Naive thymus-derived CD4-positive, alpha-beta T cell (primary cell): ENCODE measurements at regions of chr3 and their contacts with region 1.

Region 1: GRCh38 chr3:156554842-156555687 is at the start of gene SSR3:
- DNase-seq: peak; percentile 95 to 99 (median 98)
- ATAC-seq: peak; percentile 100
- H3K4me3 ChIP-seq: peak within 1 kb of the TSS; percentile 95
- H3K4me3 Mint-ChIP-seq: peak within 1 kb of the TSS; percentile 88 to 98 (median 97)
- H3K27ac ChIP-seq: peak within 1 kb of the TSS; percentile 85
- H3K27ac Mint-ChIP-seq: peak within 1 kb of the TSS; percentile 89 to 96 (median 92)
- H3K4me1 ChIP-seq: peaks cover 16% of the 10 kb centered on the region in 2 donors
- H3K4me1 Mint-ChIP-seq: peaks cover 29 to 57% (median 50%) of the 10 kb centered on the region in 7 donors
- H3K27me3 ChIP-seq: no peaks in the 10 kb centered on the region
- H3K27me3 Mint-ChIP-seq: no peaks in the 10 kb centered on the region
- total RNA-seq, gene SSR3: 56.0 to 158 (median 76.2) TPM

Region 2: DNA sequence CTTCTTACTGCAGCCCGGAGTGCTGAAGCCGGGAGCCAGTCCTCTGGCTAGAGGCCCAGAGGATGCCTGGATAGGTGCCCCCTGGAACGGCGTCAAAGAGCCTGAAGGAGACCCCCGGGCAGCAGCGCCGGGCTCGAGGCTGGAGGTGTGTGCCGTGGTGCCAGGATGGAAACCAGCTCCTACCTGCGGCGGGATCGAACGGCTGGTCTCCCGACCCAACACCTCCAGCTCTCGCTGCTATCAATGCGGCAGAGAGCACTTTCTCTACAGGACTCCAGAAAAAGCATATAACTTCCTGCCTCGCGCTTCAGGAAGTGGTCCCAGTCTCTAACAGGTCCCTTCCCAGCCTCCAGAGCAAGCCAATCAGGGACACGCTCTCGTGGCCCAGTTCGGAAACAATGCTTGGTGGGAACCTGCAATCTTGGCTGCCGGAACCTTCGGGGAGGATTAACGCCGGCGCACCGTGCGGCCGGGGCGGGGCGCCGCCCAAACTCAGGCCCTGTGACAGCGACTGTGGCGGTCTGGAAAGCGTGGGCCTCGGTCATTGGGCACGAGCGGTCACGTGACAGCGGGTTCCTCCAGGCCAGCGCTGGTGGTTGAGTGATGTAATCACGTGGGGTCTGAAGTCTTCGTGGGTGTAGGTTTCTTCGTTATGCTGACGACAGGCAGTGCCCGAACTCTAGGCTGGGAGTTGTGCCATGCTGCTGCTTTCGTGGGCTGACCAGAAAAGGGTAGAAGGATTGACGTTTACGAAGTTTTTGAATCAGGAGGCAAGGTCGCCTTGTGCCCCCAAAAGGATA is 700.7 kb before region 1 on chr3 and contains the start of gene SLC33A1:
- CTCF ChIA-PET with region 1: no interaction called
- POLR2A ChIA-PET with region 1: interaction called, 3 read pairs
- intact Hi-C with region 1: loop called (anchors 1 to 10 kb)
- DNase-seq: peak; percentile 95 to 99 (median 98)
- ATAC-seq: peak; percentile 96
- H3K4me3 ChIP-seq: peak within 1 kb of the TSS; percentile 85
- H3K4me3 Mint-ChIP-seq: peak within 1 kb of the TSS; percentile 86 to 99 (median 95)
- H3K27ac ChIP-seq: peak within 1 kb of the TSS; percentile 90
- H3K27ac Mint-ChIP-seq: peak within 1 kb of the TSS; percentile 97 to 100 (median 99)
- H3K4me1 ChIP-seq: peaks cover 19 to 33% of the 10 kb centered on the region in 2 donors
- H3K4me1 Mint-ChIP-seq: peaks cover 24 to 47% (median 39%) of the 10 kb centered on the region in 7 donors
- H3K27me3 ChIP-seq: no peaks in the 10 kb centered on the region
- H3K27me3 Mint-ChIP-seq: peaks cover 0 to 7% (median 0%) of the 10 kb centered on the region in 5 donors
- total RNA-seq, gene SLC33A1: 19.8 to 40.8 (median 31.9) TPM

Region 3: DNA sequence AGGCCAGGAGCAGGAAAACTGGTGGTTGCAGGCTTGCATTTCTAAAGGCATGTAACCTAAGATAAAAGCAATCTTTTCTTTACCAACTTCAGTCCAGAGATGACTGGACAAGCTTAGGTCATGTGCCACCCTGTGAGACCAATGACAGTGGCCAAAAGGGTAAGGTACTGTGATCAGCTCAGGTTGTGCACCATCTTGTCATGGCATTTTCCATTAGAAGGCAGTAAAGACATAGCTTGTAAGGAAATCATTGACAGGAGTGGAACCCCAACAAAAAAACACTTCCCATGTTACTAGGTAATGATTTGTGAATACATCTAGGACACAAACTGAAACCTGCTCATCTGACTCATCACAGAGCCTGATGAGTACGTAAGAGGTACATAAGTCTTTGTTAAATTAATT is 35.3 kb before region 1 on chr3:
- CTCF ChIA-PET with region 1: interaction called, 4 read pairs
- POLR2A ChIA-PET with region 1: interaction called, 7 read pairs
- intact Hi-C with region 1: loop called (anchors 1 to 2 kb)
- DNase-seq: no peak
- ATAC-seq: no peak
- H3K4me3 ChIP-seq: no peak overlapping the region
- H3K4me3 Mint-ChIP-seq: no peak overlapping the region
- H3K27ac ChIP-seq: no peak overlapping the region
- H3K27ac Mint-ChIP-seq: no peak overlapping the region
- H3K4me1 ChIP-seq: peaks cover 2 to 6% of the 10 kb centered on the region in 2 donors
- H3K4me1 Mint-ChIP-seq: peaks cover 6 to 26% (median 9%) of the 10 kb centered on the region in 7 donors
- H3K27me3 ChIP-seq: no peaks in the 10 kb centered on the region
- H3K27me3 Mint-ChIP-seq: peaks cover 13 to 84% (median 33%) of the 10 kb centered on the region in 5 donors

Region 4: DNA sequence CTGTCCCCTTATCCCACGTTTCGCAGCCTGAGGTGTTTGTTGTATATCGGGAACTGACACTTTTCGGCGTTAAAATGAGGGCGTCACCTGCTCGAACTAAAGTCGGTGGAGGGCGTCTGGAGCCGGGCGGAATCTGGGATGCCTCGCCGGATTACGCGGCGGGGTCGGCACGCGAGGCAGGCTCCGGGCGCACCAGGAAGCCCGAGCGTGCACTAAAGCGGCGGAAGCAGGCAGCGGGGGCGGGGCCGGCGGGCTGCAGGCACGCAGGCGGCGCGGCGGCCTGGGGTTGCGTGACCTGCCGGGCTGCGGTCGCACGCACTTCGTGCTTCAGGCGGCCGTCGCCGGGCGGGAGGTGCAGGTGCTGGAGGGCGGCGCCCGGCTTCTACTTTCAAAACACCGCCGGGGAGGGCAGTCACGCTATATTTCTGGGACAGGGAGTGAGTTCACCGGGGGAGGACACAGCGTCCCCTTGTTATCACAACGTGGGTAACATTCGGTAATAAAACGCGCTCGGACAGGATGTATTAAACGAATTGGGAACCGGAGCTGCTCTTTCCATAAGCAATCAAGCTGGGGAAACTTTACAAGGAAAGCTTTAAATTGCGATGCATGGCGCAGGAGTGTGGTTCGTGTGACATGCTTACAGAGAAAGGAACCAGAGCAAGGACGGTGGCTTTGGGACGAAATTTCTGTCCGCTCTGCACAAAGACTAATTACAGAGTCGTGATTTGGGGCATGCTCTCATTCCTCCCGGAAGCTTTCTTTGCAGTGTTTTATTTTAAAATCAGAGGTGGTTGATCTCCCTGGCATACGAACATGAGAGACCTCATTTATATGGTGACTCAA is 262.0 kb after region 1 on chr3:
- CTCF ChIA-PET with region 1: no interaction called
- POLR2A ChIA-PET with region 1: interaction called, 4 read pairs
- intact Hi-C with region 1: loop called (anchors 1 kb)
- DNase-seq: peak; percentile 68 to 90 (median 81)
- ATAC-seq: peak; percentile 89
- H3K4me3 ChIP-seq: peak overlapping the region; percentile 64
- H3K4me3 Mint-ChIP-seq: peak overlapping the region; percentile 87 to 97 (median 95)
- H3K27ac ChIP-seq: peak overlapping the region; percentile 67
- H3K27ac Mint-ChIP-seq: peak overlapping the region; percentile 90 to 99 (median 96)
- H3K4me1 ChIP-seq: peaks cover 8 to 10% of the 10 kb centered on the region in 2 donors
- H3K4me1 Mint-ChIP-seq: peaks cover 6 to 72% (median 29%) of the 10 kb centered on the region in 7 donors
- H3K27me3 ChIP-seq: no peaks in the 10 kb centered on the region
- H3K27me3 Mint-ChIP-seq: no peaks in the 10 kb centered on the region

Region 5: DNA sequence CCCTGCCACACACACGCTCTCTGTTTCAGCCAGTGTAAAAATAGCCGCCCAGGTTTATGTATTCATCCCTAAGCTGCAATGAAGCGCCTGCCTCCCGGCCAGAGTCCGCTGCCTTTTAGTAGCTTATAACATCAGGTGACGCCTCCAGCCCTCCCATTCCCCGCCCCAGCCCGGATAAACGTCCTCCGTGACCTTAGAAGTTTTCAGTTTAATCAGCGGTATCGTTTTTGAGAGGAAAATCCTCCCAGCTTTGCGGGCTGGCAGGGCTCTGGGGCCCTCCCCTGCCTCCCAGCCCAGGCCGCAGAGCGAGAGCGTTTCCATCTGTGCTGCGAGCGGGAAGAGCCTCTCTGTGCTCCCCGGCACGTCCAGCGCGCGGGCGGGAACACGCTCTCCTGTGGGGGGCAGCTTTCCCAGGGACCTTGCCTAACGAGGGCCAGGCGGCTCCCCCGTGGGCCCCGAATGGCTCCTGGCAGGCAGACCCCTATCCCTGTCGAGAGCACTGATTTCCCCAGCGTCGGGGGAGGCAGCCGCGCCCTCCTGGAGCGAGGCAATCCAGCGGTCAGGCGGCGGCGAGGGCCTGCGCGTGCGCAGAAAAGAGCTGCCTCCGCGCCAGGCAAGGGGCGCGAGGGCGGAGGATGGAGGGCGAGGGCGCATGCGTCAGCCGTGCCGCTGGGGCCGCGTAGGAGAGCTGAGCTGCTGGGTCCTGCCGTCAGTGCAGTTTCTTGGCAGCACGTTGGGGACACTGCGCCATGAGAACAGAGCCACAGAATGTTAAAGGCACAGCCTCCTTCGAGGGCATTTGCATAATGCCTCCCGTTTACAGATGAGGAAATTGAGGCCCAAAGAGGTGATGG is 533.8 kb after region 1 on chr3:
- CTCF ChIA-PET with region 1: interaction called, 3 read pairs
- POLR2A ChIA-PET with region 1: interaction called, 21 read pairs
- intact Hi-C with region 1: loop called (anchors 1 kb)
- DNase-seq: peak; percentile 90 to 97 (median 93)
- ATAC-seq: peak; percentile 95
- H3K4me3 ChIP-seq: peak overlapping the region; percentile 84
- H3K4me3 Mint-ChIP-seq: peak overlapping the region; percentile 81 to 89 (median 87)
- H3K27ac ChIP-seq: peak overlapping the region; percentile 83
- H3K27ac Mint-ChIP-seq: peak overlapping the region; percentile 92 to 98 (median 96)
- H3K4me1 ChIP-seq: peaks cover 11 to 30% of the 10 kb centered on the region in 2 donors
- H3K4me1 Mint-ChIP-seq: peaks cover 11 to 79% (median 23%) of the 10 kb centered on the region in 7 donors
- H3K27me3 ChIP-seq: no peaks in the 10 kb centered on the region
- H3K27me3 Mint-ChIP-seq: peaks cover 0 to 6% (median 0%) of the 10 kb centered on the region in 5 donors

Region 6: DNA sequence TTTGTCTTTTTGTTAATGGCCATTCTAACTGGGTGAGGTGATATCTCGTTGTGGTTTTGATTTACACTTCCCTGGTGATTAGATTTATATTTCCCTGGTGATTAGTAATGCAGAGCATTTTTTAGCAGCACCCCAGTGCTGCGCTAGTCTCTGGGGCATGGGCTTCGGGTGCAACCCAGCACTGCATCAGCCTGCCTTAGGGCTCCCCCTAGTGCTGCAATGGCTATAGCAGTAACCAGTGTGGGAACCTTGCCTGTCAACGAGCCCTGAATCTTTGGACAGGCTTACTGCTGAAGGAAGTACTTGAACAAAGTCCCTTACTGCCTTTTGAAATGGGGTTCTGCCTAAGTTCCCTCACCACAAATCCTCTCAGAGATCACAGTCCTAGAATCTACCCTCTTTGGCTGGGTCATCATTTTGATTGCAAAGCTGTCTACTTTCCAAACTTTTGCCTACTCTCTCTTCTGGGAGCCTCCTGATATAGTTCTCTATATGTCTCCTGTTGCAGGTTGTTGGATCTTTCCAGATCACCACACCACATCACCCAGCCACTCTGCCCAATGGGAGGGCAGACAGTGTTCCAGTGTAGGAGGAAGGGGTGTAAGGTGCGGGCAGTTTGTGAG is 684.1 kb after region 1 on chr3:
- CTCF ChIA-PET with region 1: no interaction called
- POLR2A ChIA-PET with region 1: no interaction called
- intact Hi-C with region 1: loop called in 1 of 2 experiments (anchors 1 kb)
- DNase-seq: peak; percentile 42 to 72 (median 58)
- ATAC-seq: peak; percentile 100
- H3K4me3 ChIP-seq: no peak overlapping the region
- H3K4me3 Mint-ChIP-seq: no peak overlapping the region
- H3K27ac ChIP-seq: no peak overlapping the region
- H3K27ac Mint-ChIP-seq: no peak overlapping the region
- H3K4me1 ChIP-seq: no peaks in the 10 kb centered on the region
- H3K4me1 Mint-ChIP-seq: peaks cover 0 to 6% (median 4%) of the 10 kb centered on the region in 7 donors
- H3K27me3 ChIP-seq: no peaks in the 10 kb centered on the region
- H3K27me3 Mint-ChIP-seq: peaks cover 0 to 8% (median 0%) of the 10 kb centered on the region in 5 donors